ENCODE measurements at regions of chr22 and their contacts with region 1.

Region 1: DNA sequence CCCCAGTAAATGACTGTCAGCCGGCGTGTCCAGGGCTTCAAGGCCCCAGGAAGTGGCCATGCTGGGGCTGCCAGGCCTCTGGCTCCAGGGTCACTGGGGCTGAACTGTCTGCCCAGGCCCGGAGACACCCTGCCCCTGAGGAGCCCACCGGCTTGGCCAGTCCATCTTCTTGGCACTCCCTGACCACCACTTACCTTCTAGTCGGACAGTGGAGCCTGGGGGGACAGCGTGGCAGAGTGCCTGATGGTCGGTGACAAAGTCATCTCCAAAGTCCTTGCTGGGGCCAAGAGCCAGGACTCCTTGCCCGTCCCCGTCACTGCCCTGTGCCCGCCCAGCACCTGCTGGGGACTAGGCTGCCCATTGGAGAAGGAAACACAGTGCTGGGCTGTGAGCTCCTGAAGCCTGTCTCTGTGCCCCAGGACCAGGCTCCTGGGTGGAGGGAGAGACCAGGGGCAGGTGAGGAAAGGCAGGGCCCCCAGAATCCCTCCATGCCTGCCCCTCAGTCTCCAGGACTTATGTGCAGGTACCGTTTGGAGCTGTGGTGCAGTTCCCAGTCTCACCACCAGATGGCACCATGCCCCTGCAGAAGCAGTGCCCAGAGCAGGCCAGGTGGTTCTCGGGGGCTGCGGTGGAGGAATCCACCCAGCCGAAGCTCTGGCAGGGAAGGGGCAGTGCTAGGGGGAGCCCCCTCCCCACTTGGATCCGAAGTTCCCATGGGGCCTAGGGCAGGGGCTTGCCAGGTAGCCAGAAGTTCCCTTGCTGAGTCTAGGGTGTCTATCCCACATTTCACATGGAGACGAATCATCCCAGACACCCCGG is 6.0 kb upstream of the CCDC188 start:
- DNase-seq: peak; percentile 70 to 94 (median 84)
- ATAC-seq: peak; percentile 93
- H3K4me3 ChIP-seq: no peak overlapping the region
- H3K27ac ChIP-seq: no peak overlapping the region
- H3K4me1 ChIP-seq: peaks cover 0 to 7% of the 10 kb centered on the region in 2 donors
- H3K27me3 ChIP-seq: peaks cover 0 to 31% of the 10 kb centered on the region in 2 donors
- CTCF ChIP-seq: peak; percentile 95 to 99

Region 2: GRCh38 chr22:20079745-20080444 is 76.9 kb before region 1 on chr22 and contains the start of gene DGCR8:
- intact Hi-C with region 1: no loop called
- DNase-seq: peak; percentile 94 to 98 (median 96)
- ATAC-seq: peak; percentile 97
- H3K4me3 ChIP-seq: peak within 1 kb of the TSS; percentile 76 to 80
- H3K27ac ChIP-seq: peak within 1 kb of the TSS; percentile 87 to 88
- H3K4me1 ChIP-seq: peaks cover 13 to 50% of the 10 kb centered on the region in 2 donors
- H3K27me3 ChIP-seq: no peaks in the 10 kb centered on the region
- CTCF ChIP-seq: no peak
- polyA plus RNA-seq, gene DGCR8: 42.2 to 63.2 (median 46.8) TPM

Region 3: DNA sequence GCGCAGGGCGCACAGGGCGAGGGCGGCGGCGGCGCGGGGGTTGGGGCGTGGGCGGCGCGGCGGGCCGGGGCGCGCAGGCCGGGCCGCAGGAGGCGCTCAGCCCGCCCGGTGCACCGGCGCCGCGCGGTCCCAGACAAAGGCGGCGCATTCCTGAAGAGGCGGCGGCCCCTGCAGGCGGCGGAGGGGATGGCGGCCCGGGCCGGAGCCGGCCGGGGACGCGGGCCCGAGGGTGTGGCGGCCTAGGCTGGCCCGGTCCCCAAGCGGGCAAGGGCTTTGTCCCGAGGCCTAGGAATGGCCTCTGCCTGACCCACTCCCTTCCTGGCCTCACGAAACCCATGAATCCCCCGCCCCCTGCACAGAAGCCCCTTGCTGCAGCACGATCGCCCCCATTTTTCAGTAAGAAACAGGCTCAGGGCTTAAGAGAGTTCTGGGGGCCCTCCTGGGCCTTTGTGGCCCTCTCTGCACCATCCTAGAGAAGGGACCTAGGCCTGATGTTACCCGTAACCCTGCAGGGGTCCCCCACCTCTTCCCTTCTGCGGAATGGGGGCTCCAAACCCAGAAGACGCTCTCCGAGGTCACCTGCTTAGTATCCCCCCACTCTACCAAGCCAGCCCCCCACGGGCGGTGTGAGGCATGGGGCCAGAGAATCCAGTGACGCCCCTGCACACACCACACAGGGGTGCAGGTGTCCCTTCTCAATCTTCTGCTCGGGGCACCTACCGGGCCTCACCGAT is 111.6 kb after region 1 on chr22 and contains the start of gene RTN4R:
- intact Hi-C with region 1: loop called in 1 of 2 experiments (anchors 5 kb)
- DNase-seq: peak in 3 of 4 donors; percentile 35 to 90 (median 67)
- ATAC-seq: peak; percentile 89
- H3K4me3 ChIP-seq: peak within 1 kb of the TSS; percentile 41 to 48
- H3K27ac ChIP-seq: peak within 1 kb of the TSS in 1 of 2 donors; percentile 41
- H3K4me1 ChIP-seq: peaks cover 0 to 13% of the 10 kb centered on the region in 2 donors
- H3K27me3 ChIP-seq: peaks cover 0 to 12% of the 10 kb centered on the region in 2 donors
- CTCF ChIP-seq: peak; percentile 36 to 75
- polyA plus RNA-seq, gene RTN4R: 3.7 to 9.5 (median 5.9) TPM

Region 4: DNA sequence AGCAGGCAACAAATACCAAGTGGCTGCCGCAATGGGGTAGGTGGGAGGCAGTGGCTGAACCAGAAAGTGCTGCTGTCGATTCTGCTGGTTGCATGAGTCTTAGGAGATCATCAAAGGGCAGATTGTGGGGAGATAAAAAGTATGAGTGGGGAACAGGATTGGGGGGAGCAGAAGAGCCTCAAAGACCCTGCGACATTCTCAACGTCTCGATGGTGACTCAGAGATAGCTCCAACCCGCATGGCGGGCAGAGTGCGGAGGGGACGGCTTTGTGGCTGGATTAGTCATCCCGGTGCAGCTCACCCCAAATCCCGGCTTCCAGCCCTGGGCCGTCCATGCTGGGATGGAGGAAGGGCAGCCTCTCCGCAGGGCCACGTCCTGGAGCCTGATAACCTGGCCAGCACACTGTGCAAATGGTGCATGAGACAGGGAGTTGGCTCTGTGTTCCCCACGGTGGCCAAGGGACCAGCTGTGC is 122.9 kb after region 1 on chr22:
- intact Hi-C with region 1: loop called (anchors 2 to 10 kb)
- DNase-seq: no peak
- ATAC-seq: no peak
- H3K4me3 ChIP-seq: no peak overlapping the region
- H3K27ac ChIP-seq: no peak overlapping the region
- H3K4me1 ChIP-seq: no peaks in the 10 kb centered on the region
- H3K27me3 ChIP-seq: no peaks in the 10 kb centered on the region
- CTCF ChIP-seq: no peak

Measured in left lung (tissue), 14 donors.